HepG2 (cell line): ENCODE measurements at regions of chr11 and their contacts with region 1.

Region 1: DNA sequence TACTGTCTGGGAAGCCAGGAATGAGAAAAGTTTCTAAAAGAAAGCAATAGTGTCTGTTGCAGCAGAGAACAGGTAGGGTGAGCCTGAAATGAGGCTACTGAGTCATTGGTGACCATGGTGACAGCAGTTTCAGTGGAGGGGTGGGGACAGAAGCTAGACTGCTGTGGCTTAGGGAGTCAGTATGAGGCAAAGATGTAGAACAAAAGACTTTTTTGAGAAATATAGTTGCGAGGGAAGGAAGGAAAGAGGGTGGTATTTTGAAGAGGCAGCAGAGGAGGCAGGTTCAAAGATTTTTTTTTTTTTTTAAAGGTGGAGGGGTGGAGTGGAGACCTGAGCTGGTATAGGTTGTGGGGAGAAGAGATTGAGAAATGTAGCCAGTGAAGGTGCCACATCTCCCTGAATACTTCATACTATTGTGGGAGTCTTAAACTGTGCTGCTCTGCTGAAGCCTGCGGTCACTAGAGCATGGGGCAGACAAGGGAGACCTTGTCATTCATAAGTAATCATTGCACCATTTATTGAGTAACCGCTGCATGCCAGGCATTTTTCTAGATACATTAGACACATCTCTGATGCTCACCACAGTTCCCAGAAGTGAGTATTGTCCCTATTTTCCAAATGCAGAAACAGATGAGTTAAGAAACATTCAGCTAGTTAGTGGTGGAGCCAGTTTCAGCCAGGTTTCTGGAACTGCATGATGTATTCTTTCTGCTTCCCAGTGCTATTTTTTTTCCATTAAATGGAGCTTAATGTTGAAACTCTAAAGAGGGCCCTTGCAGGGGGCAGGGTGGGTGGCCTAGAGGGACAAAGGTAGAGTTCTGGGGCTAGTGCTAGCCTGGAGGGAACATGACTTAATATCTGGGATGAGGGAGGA is 49.9 kb downstream of the STIM1 start:
- DNase-seq: peak; percentile 98
- ATAC-seq: peak; percentile 97
- H3K4me3 ChIP-seq: peak overlapping the region; percentile 4 to 33 (median 28); a peak in 2 of 6 replicates
- H3K27ac ChIP-seq: peak overlapping the region; percentile 94
- H3K4me1 ChIP-seq: peaks cover 80% of the 10 kb centered on the region
- H3K27me3 ChIP-seq: no peaks in the 10 kb centered on the region
- CTCF ChIP-seq: no peak
- EP300 ChIP-seq: peak; percentile 86 to 91
- POLR2A ChIP-seq: peak in 1 of 2 experiments; percentile 38; a peak in 1 of 4 replicates
- RAD21 ChIP-seq: no peak

Region 2: GRCh38 chr11:3867209-3868091 is 37.9 kb before region 1 on chr11:
- CTCF ChIA-PET with region 1: no interaction called
- POLR2A ChIA-PET with region 1: interaction called, 12 read pairs
- in situ Hi-C with region 1: no loop called
- intact Hi-C with region 1: loop called (anchors 1 kb)
- DNase-seq: peak; percentile 28
- ATAC-seq: peak; percentile 59
- H3K4me3 ChIP-seq: peak overlapping the region; percentile 15 to 33 (median 19)
- H3K27ac ChIP-seq: peak overlapping the region; percentile 84
- H3K4me1 ChIP-seq: peaks cover 67% of the 10 kb centered on the region
- H3K27me3 ChIP-seq: no peaks in the 10 kb centered on the region; a peak in 1 of 5 replicates
- CTCF ChIP-seq: no peak
- EP300 ChIP-seq: no peak
- POLR2A ChIP-seq: no peak
- RAD21 ChIP-seq: no peak

Region 3: DNA sequence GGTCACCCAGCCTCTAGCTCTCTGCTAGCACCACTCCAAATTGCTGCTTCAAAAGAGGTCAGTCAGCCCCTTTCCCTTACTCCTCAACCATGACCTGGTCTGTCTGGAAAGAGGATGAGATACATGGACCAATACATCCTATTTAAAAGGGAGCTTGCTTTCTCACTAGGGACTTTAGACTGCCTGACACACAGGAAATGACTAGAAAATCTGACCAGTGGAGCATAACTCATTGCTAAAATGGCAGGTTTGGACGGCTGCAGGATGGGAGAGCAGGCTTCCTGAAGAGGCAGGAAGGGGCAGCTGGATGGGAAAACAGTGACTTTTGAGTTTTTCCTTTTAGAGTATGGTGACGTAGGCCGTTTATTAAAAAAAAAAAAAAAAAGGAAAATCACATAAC is 24.6 kb before region 1 on chr11:
- CTCF ChIA-PET with region 1: no interaction called
- POLR2A ChIA-PET with region 1: interaction called, 10 read pairs
- in situ Hi-C with region 1: no loop called
- intact Hi-C with region 1: no loop called
- DNase-seq: peak; percentile 65
- ATAC-seq: peak; percentile 54
- H3K4me3 ChIP-seq: peak overlapping the region; percentile 41 to 49 (median 47); a peak in 5 of 6 replicates
- H3K27ac ChIP-seq: peak overlapping the region; percentile 78
- H3K4me1 ChIP-seq: peaks cover 59% of the 10 kb centered on the region
- H3K27me3 ChIP-seq: no peaks in the 10 kb centered on the region
- CTCF ChIP-seq: no peak
- EP300 ChIP-seq: no peak
- POLR2A ChIP-seq: no peak
- RAD21 ChIP-seq: no peak

Region 4: DNA sequence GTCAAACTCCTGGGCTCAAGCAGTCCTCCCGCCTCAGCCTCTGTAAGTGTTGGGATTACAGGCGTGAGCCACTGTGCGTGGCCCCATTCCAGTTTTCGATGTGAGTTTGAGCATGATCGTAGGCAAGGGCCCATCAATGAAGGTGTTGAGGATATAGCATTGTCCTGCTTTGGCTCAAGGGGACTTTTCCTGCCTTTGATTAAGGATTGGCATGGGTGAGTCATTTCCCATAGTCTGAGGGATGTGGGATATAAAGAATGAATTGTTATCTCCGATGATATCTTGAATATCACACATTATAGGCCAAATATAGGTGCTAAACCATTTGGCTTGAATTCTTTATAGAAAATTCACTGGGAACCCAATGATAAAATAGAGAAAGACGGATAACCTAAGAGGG is 19.5 kb before region 1 on chr11:
- CTCF ChIA-PET with region 1: no interaction called
- POLR2A ChIA-PET with region 1: interaction called, 10 read pairs
- in situ Hi-C with region 1: no loop called
- intact Hi-C with region 1: loop called (anchors 2 kb)
- DNase-seq: no peak
- ATAC-seq: no peak
- H3K4me3 ChIP-seq: no peak overlapping the region
- H3K27ac ChIP-seq: no peak overlapping the region
- H3K4me1 ChIP-seq: peaks cover 46% of the 10 kb centered on the region
- H3K27me3 ChIP-seq: no peaks in the 10 kb centered on the region
- CTCF ChIP-seq: no peak
- EP300 ChIP-seq: no peak
- POLR2A ChIP-seq: no peak
- RAD21 ChIP-seq: no peak